Right ventricle myocardium inferior (tissue), 1 donor: ENCODE measurements at regions of chr14 and their contacts with region 1.

Region 1: GRCh38 chr14:56491299-56492285 is 88.0 kb upstream of the TMEM260 start:
- DNase-seq: no peak
- ATAC-seq: no peak

Region 2: DNA sequence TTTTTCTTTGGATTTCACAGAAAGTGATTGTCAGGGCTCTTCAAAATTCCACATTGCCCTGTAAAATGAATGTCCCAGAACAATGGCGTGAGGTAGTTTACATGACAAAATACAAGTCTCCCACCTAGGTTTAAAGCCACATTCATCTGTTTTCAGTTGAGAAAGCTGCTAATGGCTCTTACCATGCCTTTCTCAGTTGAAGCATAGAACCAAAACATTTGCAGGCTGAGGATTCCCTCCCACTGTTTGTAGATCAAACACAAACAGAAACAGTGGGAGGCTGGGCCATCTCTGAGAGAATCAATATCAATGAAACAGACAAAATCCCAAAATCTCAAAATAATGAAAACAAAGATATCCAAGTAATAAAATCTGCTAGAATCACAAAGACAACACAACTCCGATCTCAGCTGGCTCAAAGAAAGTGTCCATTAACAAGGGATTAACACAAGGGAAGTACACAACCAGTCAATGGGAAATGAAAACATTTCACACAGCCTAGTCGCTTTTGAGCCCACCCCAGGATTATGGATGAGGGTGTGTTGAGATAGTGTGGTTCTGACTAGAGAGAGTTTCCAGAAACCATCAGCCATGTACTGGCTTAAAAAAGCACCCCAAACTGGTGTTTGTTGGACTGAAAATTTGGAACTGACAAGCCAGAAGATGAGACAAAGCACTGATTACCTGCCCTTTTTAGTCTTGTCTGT is 33.5 kb after region 1 on chr14:
- intact Hi-C with region 1: no loop called
- DNase-seq: no peak
- ATAC-seq: no peak

Region 3: GRCh38 chr14:56579345-56580220 is 88.0 kb after region 1 on chr14 and contains the start of gene TMEM260:
- intact Hi-C with region 1: loop called (anchors 10 kb)
- DNase-seq: peak; percentile 91
- ATAC-seq: peak; percentile 97
- total RNA-seq, gene TMEM260: 5.9 TPM

Region 4: GRCh38 chr14:56686416-56686815 is 194.8 kb after region 1 on chr14:
- intact Hi-C with region 1: loop called (anchors 10 kb)
- DNase-seq: peak; percentile 73
- ATAC-seq: peak; percentile 93

Region 5: DNA sequence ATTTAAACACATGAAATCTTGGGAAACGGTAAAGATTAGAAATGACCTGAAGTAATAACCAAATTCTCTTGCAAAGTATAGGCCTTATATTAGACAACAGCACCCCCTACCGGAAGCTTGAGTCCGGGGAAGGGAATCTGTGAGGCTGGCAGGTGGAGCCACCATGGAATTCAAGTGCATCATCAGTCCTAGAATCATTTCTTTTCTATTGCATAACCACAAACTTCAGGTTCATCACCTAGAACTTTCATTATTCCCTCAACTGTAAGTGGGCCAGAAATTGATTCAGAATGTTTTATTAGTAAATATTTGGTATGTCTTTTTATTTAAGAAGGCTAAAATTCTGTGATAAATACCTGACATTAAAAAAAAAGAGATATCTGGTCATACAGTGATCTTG is 825.7 kb after region 1 on chr14:
- intact Hi-C with region 1: loop called (anchors 2 kb)
- DNase-seq: no peak
- ATAC-seq: no peak